ENCODE measurements at regions of chr6 and their contacts with region 1.

Region 1: DNA sequence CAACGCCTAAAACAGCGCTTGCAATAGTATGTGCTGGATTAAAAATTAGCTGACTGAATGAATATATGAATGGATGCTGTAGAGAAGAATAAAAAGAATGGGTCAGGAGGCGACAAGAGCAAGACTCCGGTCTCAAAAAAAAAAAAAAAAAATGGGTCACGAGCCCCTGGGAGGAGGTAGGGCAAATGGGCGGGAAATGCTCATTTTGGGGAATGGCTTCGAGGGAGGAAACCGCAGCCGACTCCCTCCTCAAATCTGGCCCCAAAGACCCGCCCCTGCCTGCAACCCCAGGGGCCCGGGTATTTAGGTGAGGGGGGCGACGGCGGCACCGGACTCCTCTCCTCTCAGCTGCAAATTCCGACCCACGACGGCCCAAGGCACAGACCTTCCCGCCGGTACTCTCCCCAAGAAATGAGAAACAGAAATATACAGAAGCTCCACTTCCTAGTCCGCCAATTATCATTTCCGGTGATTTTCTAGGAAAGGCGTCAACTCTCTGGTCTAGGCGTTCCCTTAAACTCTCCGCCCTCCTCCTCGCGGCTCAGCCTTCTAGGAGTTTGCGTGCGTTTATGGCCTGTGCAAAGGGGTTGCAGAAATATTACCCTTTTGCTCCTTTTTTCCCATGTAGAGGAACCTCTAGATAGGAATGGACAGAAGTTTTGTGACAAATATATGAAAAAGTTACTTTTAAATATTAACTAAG is at the start of gene ZNF311:
- DNase-seq: peak; percentile 70
- ATAC-seq: peak; percentile 99
- total RNA-seq, gene ZNF311: 2.1 TPM

Region 2: DNA sequence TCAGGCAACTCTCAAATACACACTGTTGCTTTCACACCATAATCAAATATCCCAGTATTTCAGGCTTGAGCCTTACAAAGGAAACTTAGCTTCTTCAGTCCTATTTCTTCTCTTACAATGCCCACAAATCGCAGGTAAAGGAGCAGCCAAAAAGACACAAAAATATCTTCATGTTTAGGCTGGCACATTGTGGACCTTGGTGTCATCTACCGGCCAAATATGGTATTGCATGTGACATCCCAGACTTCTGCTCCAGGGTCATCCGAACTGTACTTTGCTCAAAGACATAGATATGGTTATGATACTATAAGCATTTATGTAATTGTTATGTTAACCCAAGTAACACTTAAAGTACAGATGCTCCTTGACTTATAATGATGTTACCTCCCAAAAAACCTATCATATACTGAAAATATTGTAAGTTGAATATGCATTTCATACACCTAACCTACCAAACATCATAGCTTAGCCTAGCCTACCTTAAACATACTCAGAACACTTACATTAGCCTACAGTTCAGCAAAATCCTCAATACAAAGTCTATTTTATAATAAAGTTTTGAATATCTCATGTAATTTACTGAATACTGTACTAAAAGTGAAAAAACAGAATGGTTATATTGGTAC is 584.2 kb after region 1 on chr6:
- intact Hi-C with region 1: loop called (anchors 5 kb)
- DNase-seq: no peak
- ATAC-seq: peak; percentile 61

Region 3: GRCh38 chr6:29953686-29954085 is 948.4 kb after region 1 on chr6:
- intact Hi-C with region 1: no loop called
- DNase-seq: no peak
- ATAC-seq: no peak